ENCODE measurements at regions of chr12 and their contacts with region 1.

Region 1: DNA sequence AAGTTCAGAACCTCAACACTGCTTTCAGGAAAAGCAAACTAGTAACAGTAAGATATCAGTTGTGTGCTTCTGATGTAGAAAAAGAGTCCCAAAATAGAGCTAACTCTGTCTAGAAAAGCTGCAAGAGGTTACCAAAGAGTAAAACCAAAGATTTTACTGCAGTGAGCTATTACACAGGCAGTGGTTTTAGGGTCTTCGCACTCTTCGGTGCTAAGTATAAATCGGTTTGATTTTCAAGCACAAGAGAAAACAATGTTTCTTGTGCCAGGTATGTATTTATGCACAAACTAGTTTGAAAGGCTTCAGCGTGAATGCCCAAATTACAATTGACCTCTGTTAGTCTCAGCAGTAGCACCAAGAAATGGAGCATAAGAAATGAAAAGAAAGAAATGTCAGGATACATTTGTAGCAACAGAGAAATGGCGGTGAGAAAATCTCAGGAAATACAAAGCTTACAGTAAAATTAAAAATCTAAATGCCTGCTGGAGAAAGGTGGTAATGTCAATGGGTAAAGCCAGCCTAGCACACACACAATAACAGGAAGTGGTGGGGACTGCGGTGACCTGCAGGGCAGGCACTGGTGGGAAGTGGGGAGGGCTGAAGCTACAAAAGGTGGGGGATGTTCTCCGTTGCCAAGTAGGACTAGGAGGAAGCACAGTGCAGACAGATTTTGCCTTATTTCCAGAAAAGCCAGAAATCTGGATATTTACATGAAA is 18.0 kb upstream of the DYRK2 start:
- DNase-seq: peak; percentile 81
- H3K4me3 Mint-ChIP-seq: peak overlapping the region; percentile 37
- H3K27ac Mint-ChIP-seq: peak overlapping the region; percentile 89
- H3K4me1 Mint-ChIP-seq: peaks cover 62% of the 10 kb centered on the region
- H3K27me3 Mint-ChIP-seq: no peaks in the 10 kb centered on the region

Region 2: GRCh38 chr12:66776974-66777373 is 853.6 kb before region 1 on chr12:
- intact Hi-C with region 1: loop called (anchors 5 kb)
- DNase-seq: peak; percentile 65
- H3K4me3 Mint-ChIP-seq: peak overlapping the region; percentile 45
- H3K27ac Mint-ChIP-seq: no peak overlapping the region
- H3K4me1 Mint-ChIP-seq: peaks cover 14% of the 10 kb centered on the region
- H3K27me3 Mint-ChIP-seq: peaks cover 60% of the 10 kb centered on the region

Region 3: GRCh38 chr12:67452119-67452805 is 178.3 kb before region 1 on chr12:
- intact Hi-C with region 1: loop called (anchors 2 kb)
- DNase-seq: no peak
- H3K4me3 Mint-ChIP-seq: peak overlapping the region; percentile 12
- H3K27ac Mint-ChIP-seq: peak overlapping the region; percentile 82
- H3K4me1 Mint-ChIP-seq: peaks cover 47% of the 10 kb centered on the region
- H3K27me3 Mint-ChIP-seq: peaks cover 20% of the 10 kb centered on the region

Region 4: DNA sequence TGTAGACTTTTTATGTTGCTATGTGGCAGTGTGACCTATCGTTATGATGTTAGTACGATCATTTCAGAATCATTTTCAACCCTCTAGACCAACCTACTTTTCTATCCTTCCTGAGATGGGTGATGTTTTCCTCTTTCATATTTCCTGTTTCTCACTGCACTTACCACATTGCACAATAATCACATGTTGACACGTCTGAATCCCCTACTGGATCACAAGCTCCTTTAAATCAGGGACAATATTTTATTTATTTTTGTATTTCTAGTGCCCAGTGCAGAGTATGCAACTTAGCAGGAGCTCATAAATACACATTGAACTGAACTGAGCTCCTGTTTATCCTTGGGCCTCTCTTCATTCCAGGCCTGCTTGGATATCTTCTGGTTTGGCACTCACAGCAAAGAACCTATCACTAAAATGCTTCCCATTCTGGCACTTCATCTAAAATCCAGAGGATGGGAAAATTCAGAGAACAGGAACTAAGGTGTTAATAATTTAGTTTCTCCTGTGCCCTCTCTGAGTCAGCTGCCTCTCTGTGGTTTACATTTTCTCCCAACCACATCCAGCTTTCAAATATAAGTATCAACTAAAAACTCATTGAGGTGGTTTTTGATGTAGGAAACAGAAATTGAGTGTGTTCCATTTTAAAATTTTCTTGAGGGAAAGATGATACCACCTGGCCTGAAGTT is 51.4 kb before region 1 on chr12:
- intact Hi-C with region 1: loop called (anchors 2 kb)
- DNase-seq: peak; percentile 11
- H3K4me3 Mint-ChIP-seq: peak overlapping the region; percentile 30
- H3K27ac Mint-ChIP-seq: peak overlapping the region; percentile 56
- H3K4me1 Mint-ChIP-seq: peaks cover 30% of the 10 kb centered on the region
- H3K27me3 Mint-ChIP-seq: peaks cover 12% of the 10 kb centered on the region

Region 5: GRCh38 chr12:67592216-67593011 is 38.1 kb before region 1 on chr12:
- intact Hi-C with region 1: loop called (anchors 2 kb)
- DNase-seq: peak; percentile 20
- H3K4me3 Mint-ChIP-seq: peak overlapping the region; percentile 41
- H3K27ac Mint-ChIP-seq: peak overlapping the region; percentile 90
- H3K4me1 Mint-ChIP-seq: peaks cover 58% of the 10 kb centered on the region
- H3K27me3 Mint-ChIP-seq: no peaks in the 10 kb centered on the region

Region 6: DNA sequence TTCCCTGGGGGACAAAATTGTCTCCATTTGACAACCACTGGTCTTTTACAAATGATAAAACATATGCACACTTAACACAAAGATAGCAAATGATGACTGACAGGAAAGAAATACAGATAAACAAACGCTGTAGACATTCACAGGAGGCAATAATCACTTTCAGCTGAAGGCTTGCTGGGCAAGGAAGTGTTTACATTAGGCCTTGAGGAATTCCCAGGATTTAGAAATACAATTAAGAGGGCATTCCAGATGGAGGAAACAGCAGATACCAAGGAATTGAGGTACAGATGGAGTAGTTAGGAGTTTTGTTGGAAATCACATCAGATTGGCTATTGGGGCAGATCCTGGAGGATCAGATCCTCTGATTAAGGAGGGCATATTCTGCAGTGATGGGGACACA is 111.9 kb after region 1 on chr12:
- intact Hi-C with region 1: no loop called
- DNase-seq: no peak
- H3K4me3 Mint-ChIP-seq: no peak overlapping the region
- H3K27ac Mint-ChIP-seq: no peak overlapping the region
- H3K4me1 Mint-ChIP-seq: no peaks in the 10 kb centered on the region
- H3K27me3 Mint-ChIP-seq: peaks cover 2% of the 10 kb centered on the region

Region 7: DNA sequence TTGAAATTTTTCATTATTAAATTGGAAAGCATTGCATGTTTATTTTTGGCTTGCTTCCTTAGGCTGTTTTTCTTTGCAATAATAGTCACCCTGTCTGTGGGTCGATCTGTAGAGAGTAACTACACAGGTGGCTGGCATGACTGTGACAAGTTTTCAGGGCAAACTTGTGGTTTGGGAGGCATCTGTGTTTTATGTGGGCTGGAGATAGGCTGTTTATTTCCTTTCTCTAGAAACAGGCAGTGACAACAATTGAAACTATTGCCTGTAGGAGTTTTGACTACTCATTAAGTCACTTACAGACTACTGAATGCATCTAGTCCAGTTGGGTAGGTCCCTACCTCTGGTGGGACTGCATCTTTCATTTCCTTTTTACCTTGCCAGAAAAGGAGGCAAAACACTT is 173.6 kb after region 1 on chr12:
- intact Hi-C with region 1: loop called (anchors 1 kb)
- DNase-seq: peak; percentile 22
- H3K4me3 Mint-ChIP-seq: no peak overlapping the region
- H3K27ac Mint-ChIP-seq: no peak overlapping the region
- H3K4me1 Mint-ChIP-seq: peaks cover 13% of the 10 kb centered on the region
- H3K27me3 Mint-ChIP-seq: peaks cover 4% of the 10 kb centered on the region

Measured in activated T-helper 1 cell treated with anti-CD3 and anti-CD28 coated beads, Interleukin-12 subunit alpha, Interleukin-12 subunit beta, Interleukin-2, Interleukin-4 antibody, amounts not matched to agents 30 ng/mL and 10 ng/mL and 1 ng/mL, durations not matched to agents 14 hours and 24 hours and 36 hours (primary cell).